ENCODE measurements at regions of chr1 and their contacts with region 1.

Region 1: DNA sequence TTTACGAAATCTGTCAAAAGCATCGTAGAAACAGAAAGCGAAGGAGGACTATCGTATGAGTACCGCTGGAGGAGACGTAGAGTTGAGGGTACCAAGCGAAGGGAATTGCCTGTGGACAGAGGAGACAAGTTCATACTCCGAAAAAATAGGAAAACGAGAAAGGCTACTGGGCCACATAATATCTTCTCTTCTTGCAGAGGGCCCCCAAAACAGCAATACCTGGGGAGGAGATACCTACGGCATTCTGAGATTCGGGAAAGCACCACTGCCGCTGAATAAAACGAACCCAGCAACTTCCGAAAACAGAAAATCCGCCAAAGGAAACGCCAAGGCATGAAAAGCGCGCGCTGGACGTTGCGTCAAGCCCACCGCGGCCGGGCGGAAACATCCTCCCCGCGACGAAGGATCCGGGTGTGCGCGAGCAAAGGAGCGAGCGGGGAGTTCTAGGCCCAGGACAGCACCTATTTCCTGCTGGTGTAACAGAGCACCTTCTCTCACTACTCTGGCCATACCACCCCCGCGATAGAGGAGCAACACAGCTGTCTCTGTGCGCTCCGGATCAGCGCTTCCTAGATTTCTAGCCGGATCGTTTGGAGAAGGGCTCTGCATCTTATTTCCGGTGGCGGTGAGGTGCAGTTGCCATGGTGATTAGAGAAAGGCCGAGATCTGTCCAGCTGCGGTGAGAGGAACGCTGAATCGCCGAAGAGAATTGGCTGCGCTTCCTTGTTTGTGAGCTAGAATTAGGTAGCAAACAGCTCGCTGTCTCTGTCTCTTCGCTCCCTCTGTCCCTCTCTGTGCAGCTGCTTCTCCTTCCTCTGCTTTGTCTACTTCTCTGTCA is at the starts of genes EFCAB7 and ITGB3BP:
- DNase-seq: peak; percentile 81 to 84 (median 81)
- H3K4me3 ChIP-seq: peak within 1 kb of the TSS; percentile 92 to 94
- H3K4me3 Mint-ChIP-seq: peak within 1 kb of the TSS; percentile 89 to 98 (median 93)
- H3K27ac ChIP-seq: peak within 1 kb of the TSS; percentile 79
- H3K27ac Mint-ChIP-seq: peak within 1 kb of the TSS; percentile 93 to 99 (median 97)
- H3K4me1 ChIP-seq: peaks cover 25% of the 10 kb centered on the region
- H3K4me1 Mint-ChIP-seq: peaks cover 7 to 50% (median 22%) of the 10 kb centered on the region in 4 donors
- H3K27me3 ChIP-seq: no peaks in the 10 kb centered on the region
- H3K27me3 Mint-ChIP-seq: no peaks in the 10 kb centered on the region
- total RNA-seq, gene EFCAB7: 9.8 to 15.1 TPM
- total RNA-seq, gene ITGB3BP: 26.4 to 27.8 TPM

Region 2: DNA sequence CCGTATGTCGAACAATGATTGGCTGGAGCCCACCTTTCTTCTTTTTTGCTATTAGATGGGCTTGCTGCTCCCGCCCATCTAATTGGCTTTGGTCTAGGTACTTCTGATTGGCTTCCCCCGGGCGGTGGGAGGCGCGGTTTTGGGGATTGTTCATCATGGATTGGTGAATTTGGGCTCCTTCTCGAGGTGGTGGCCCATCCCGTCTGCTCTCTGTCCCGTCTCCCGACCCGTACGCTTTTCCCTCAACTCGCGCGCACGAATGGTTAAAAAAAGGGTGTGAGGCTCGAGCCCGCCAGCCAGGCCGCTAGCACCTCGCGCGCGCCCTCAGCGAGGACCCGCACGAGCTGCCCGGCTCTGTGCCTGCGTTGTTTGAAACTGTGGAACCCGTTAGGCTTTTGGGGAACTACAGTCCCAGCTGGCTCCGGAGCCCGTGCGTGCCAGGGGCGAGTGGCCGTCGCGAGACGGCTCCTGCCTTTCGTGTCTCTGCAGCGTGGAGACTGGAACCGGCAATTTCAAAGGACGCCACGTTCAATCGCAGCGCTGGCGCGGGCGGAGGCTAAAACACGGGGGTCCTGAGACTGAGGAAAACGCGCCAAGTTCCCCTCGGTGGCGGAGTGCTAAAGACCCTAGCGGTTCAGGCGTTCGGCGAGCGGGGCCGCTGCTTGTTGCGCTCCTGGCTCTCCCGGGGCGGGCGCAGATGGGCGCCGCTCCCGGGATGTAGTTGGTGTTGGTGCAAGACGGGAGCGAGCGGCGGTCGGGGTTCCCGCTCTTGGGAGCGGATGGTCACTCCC is 1086.4 kb before region 1 on chr1 and contains the start of gene USP1:
- CTCF ChIA-PET with region 1: no interaction called
- POLR2A ChIA-PET with region 1: interaction called, 3 read pairs
- intact Hi-C with region 1: loop called (anchors 1 kb)
- DNase-seq: peak in 4 of 5 donors; percentile 98 to 100 (median 99)
- H3K4me3 ChIP-seq: peak within 1 kb of the TSS; percentile 84 to 97
- H3K4me3 Mint-ChIP-seq: peak within 1 kb of the TSS; percentile 87 to 97 (median 96)
- H3K27ac ChIP-seq: peak within 1 kb of the TSS; percentile 97
- H3K27ac Mint-ChIP-seq: peak within 1 kb of the TSS; percentile 97 to 100 (median 99)
- H3K4me1 ChIP-seq: peaks cover 43% of the 10 kb centered on the region
- H3K4me1 Mint-ChIP-seq: peaks cover 24 to 57% (median 36%) of the 10 kb centered on the region in 4 donors
- H3K27me3 ChIP-seq: no peaks in the 10 kb centered on the region
- H3K27me3 Mint-ChIP-seq: peaks cover 0 to 2% of the 10 kb centered on the region in 2 donors
- total RNA-seq, gene USP1: 46.3 to 50.0 TPM

Region 3: DNA sequence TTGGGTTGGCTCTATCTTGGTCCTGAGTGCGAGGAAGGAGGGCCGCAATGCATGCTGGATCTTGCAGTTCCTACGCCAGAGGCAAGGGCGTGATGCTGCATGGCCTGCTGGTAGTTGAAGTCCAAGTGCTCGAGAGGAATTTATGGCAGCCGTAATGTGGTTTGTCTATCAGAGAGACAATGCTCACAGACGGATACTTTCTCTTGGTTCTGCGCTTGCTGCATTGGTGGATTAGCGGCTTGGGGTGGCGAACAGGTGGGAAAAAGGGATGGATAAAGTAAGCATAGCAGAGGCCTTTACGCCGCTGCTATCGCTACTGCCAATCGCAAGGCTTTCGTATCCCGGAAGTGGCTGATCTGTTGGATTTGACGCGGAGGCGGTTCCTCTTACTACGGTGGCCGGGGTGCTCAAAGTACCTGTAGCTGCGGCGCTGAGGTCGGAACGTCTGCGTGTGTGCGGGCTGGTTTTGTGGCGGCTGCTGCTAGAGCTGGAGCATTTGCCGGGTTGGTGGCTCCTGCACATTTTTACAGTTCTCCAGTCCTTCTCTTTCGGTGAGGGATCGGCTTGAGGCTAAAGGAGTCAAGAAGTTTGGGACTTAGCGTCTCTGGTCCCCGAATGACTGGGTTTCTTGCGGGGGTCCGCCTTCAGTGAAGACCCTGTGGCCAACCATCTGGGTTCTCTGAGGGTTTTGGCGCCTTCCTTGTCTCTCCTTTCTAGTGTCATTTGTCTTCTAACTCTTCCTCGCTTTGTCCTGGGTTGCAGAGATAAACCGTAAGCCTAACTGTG is 739.2 kb before region 1 on chr1 and contains the start of gene ATG4C:
- CTCF ChIA-PET with region 1: no interaction called
- POLR2A ChIA-PET with region 1: no interaction called
- intact Hi-C with region 1: loop called (anchors 1 kb)
- DNase-seq: peak; percentile 95 to 97 (median 96)
- H3K4me3 ChIP-seq: peak within 1 kb of the TSS; percentile 94 to 100
- H3K4me3 Mint-ChIP-seq: no peak within 1 kb of the TSS
- H3K27ac ChIP-seq: peak within 1 kb of the TSS; percentile 85
- H3K27ac Mint-ChIP-seq: no peak within 1 kb of the TSS
- H3K4me1 ChIP-seq: peaks cover 14% of the 10 kb centered on the region
- H3K4me1 Mint-ChIP-seq: peaks cover 5 to 10% (median 7%) of the 10 kb centered on the region in 4 donors
- H3K27me3 ChIP-seq: no peaks in the 10 kb centered on the region
- H3K27me3 Mint-ChIP-seq: peaks cover 3 to 4% of the 10 kb centered on the region in 2 donors
- total RNA-seq, gene ATG4C: 11.7 to 15.2 TPM

Region 4: GRCh38 chr1:63316984-63317816 is 205.9 kb before region 1 on chr1:
- CTCF ChIA-PET with region 1: no interaction called
- POLR2A ChIA-PET with region 1: no interaction called
- intact Hi-C with region 1: loop called (anchors 5 kb)
- DNase-seq: peak in 3 of 5 donors; percentile 25 to 40 (median 34)
- H3K4me3 ChIP-seq: peak overlapping the region in 1 of 2 donors; percentile 32
- H3K4me3 Mint-ChIP-seq: peak overlapping the region; percentile 42 to 82 (median 66)
- H3K27ac ChIP-seq: no peak overlapping the region
- H3K27ac Mint-ChIP-seq: peak overlapping the region in 2 of 7 donors; percentile 5 to 91
- H3K4me1 ChIP-seq: peaks cover 23% of the 10 kb centered on the region
- H3K4me1 Mint-ChIP-seq: peaks cover 12 to 44% (median 26%) of the 10 kb centered on the region in 4 donors
- H3K27me3 ChIP-seq: peaks cover 62% of the 10 kb centered on the region
- H3K27me3 Mint-ChIP-seq: peaks cover 62 to 64% of the 10 kb centered on the region in 2 donors

Region 5: DNA sequence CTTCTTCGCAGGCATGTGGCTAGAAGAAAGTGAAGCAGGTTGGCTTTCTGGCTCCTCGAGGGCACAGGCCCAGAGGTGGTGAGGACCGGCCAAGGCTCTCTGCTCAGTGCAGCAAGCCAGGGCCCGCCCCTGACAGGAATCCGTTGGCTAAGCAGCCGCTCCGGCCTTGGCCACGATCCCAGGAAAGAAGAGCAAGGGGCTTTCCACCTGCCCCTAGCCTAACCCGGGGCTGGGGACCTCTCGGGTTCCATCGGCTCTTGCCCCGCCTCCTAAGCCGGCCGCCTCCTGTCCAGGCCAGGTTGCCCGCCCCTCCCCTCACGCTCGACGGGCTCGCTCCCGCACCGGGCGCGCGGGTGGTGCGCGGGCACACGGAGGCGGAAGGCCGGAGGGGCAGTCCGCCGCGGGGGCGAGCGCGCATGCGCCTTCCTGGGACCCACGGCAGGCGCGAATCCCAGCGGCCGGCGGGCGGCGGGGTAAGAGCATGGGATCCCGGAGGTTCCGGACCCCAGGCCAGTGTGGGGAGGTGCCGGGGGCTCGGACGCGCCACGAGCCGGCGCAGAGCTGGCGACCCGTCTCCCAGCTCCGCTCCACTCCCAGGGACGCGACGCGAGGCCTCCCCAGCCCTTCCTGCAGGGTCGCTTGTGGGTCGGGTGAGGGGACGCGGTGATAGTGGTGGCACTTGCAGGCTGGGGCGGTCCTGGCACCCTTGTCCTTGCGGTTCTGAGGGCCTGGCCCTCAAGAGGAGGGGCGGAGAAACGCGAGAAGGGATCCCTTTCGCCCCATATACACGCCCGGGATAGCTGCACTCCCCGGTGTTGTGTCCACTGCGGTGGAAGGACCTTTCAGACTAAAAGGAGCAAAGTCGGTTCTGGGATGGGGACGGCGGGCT is 155.7 kb before region 1 on chr1 and contains the start of gene ALG6:
- CTCF ChIA-PET with region 1: no interaction called
- POLR2A ChIA-PET with region 1: interaction called, 3 read pairs
- intact Hi-C with region 1: loop called (anchors 1 kb)
- DNase-seq: peak; percentile 79 to 92 (median 86)
- H3K4me3 ChIP-seq: peak within 1 kb of the TSS; percentile 67 to 80
- H3K4me3 Mint-ChIP-seq: peak within 1 kb of the TSS; percentile 93 to 98 (median 94)
- H3K27ac ChIP-seq: peak within 1 kb of the TSS; percentile 59
- H3K27ac Mint-ChIP-seq: peak within 1 kb of the TSS; percentile 67 to 92 (median 89)
- H3K4me1 ChIP-seq: peaks cover 21% of the 10 kb centered on the region
- H3K4me1 Mint-ChIP-seq: peaks cover 21 to 36% (median 29%) of the 10 kb centered on the region in 4 donors
- H3K27me3 ChIP-seq: no peaks in the 10 kb centered on the region
- H3K27me3 Mint-ChIP-seq: peaks cover 0 to 7% of the 10 kb centered on the region in 2 donors
- total RNA-seq, gene ALG6: 27.6 to 28.4 TPM

Region 6: DNA sequence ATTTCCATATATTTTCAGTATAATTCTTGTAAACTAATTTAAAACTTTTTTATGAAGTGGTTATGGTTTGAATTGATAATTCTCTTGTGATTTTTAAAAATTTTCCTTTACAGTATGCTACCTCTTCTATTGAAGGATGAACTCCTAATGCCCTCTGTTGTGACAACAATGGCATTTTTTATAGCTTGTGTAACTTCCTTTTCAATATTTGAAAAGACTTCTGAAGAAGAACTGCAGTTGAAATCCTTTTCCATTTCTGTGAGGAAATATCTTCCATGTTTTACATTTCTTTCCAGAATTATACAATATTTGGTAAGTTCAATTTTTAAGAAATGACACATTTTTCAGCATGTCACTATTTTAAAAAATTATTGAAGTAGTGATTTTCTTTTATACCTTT is 94.3 kb before region 1 on chr1:
- CTCF ChIA-PET with region 1: no interaction called
- POLR2A ChIA-PET with region 1: no interaction called
- intact Hi-C with region 1: no loop called
- DNase-seq: no peak
- H3K4me3 ChIP-seq: no peak overlapping the region
- H3K4me3 Mint-ChIP-seq: no peak overlapping the region
- H3K27ac ChIP-seq: no peak overlapping the region
- H3K27ac Mint-ChIP-seq: no peak overlapping the region
- H3K4me1 ChIP-seq: no peaks in the 10 kb centered on the region
- H3K4me1 Mint-ChIP-seq: no peaks in the 10 kb centered on the region
- H3K27me3 ChIP-seq: no peaks in the 10 kb centered on the region
- H3K27me3 Mint-ChIP-seq: no peaks in the 10 kb centered on the region

Region 7: GRCh38 chr1:63498106-63498505 is 25.0 kb before region 1 on chr1:
- CTCF ChIA-PET with region 1: no interaction called
- POLR2A ChIA-PET with region 1: no interaction called
- intact Hi-C with region 1: no loop called
- DNase-seq: no peak
- H3K4me3 ChIP-seq: no peak overlapping the region
- H3K4me3 Mint-ChIP-seq: no peak overlapping the region
- H3K27ac ChIP-seq: no peak overlapping the region
- H3K27ac Mint-ChIP-seq: no peak overlapping the region
- H3K4me1 ChIP-seq: no peaks in the 10 kb centered on the region
- H3K4me1 Mint-ChIP-seq: peaks cover 0 to 3% (median 1%) of the 10 kb centered on the region in 4 donors
- H3K27me3 ChIP-seq: no peaks in the 10 kb centered on the region
- H3K27me3 Mint-ChIP-seq: no peaks in the 10 kb centered on the region

Region 8: GRCh38 chr1:63651161-63651701 is 128.1 kb after region 1 on chr1:
- CTCF ChIA-PET with region 1: no interaction called
- POLR2A ChIA-PET with region 1: interaction called, 3 read pairs
- intact Hi-C with region 1: loop called (anchors 2 kb)
- DNase-seq: peak; percentile 52 to 63 (median 57)
- H3K4me3 ChIP-seq: peak overlapping the region in 1 of 2 donors; percentile 7
- H3K4me3 Mint-ChIP-seq: peak overlapping the region; percentile 16 to 91 (median 80)
- H3K27ac ChIP-seq: peak overlapping the region; percentile 31
- H3K27ac Mint-ChIP-seq: peak overlapping the region; percentile 90 to 97 (median 96)
- H3K4me1 ChIP-seq: peaks cover 39% of the 10 kb centered on the region
- H3K4me1 Mint-ChIP-seq: peaks cover 13 to 44% (median 31%) of the 10 kb centered on the region in 4 donors
- H3K27me3 ChIP-seq: no peaks in the 10 kb centered on the region
- H3K27me3 Mint-ChIP-seq: no peaks in the 10 kb centered on the region

Region 9: GRCh38 chr1:65254319-65255034 is 1731.4 kb after region 1 on chr1:
- CTCF ChIA-PET with region 1: no interaction called
- POLR2A ChIA-PET with region 1: no interaction called
- intact Hi-C with region 1: loop called (anchors 10 kb)
- DNase-seq: peak; percentile 81 to 85 (median 83)
- H3K4me3 ChIP-seq: peak overlapping the region; percentile 45 to 68
- H3K4me3 Mint-ChIP-seq: peak overlapping the region; percentile 85 to 98 (median 94)
- H3K27ac ChIP-seq: no peak overlapping the region
- H3K27ac Mint-ChIP-seq: peak overlapping the region in 5 of 7 donors; percentile 72 to 94 (median 88)
- H3K4me1 ChIP-seq: peaks cover 20% of the 10 kb centered on the region
- H3K4me1 Mint-ChIP-seq: peaks cover 8 to 20% (median 16%) of the 10 kb centered on the region in 4 donors
- H3K27me3 ChIP-seq: no peaks in the 10 kb centered on the region
- H3K27me3 Mint-ChIP-seq: peaks cover 0 to 4% of the 10 kb centered on the region in 2 donors